Activated naive CD4-positive, alpha-beta T cell treated with anti-CD3 and anti-CD28 coated beads, Interleukin-2, amount 10 ng/mL, durations not matched to agents 7 days and 5 days (primary cell): ENCODE measurements at regions of chr4 and their contacts with region 1.

Region 1: GRCh38 chr4:153573881-153574802 is 108.0 kb downstream of the TMEM131L start:
- DNase-seq: peak; percentile 86
- H3K4me3 Mint-ChIP-seq: no peak overlapping the region
- H3K27ac Mint-ChIP-seq: peak overlapping the region; percentile 81
- H3K4me1 Mint-ChIP-seq: peaks cover 66% of the 10 kb centered on the region
- H3K27me3 Mint-ChIP-seq: no peaks in the 10 kb centered on the region

Region 2: GRCh38 chr4:153257151-153257620 is 317.0 kb before region 1 on chr4:
- CTCF ChIA-PET with region 1: no interaction called
- DNase-seq: peak; percentile 26
- H3K4me3 Mint-ChIP-seq: no peak overlapping the region
- H3K27ac Mint-ChIP-seq: no peak overlapping the region
- H3K4me1 Mint-ChIP-seq: peaks cover 1% of the 10 kb centered on the region
- H3K27me3 Mint-ChIP-seq: peaks cover 28% of the 10 kb centered on the region

Region 3: DNA sequence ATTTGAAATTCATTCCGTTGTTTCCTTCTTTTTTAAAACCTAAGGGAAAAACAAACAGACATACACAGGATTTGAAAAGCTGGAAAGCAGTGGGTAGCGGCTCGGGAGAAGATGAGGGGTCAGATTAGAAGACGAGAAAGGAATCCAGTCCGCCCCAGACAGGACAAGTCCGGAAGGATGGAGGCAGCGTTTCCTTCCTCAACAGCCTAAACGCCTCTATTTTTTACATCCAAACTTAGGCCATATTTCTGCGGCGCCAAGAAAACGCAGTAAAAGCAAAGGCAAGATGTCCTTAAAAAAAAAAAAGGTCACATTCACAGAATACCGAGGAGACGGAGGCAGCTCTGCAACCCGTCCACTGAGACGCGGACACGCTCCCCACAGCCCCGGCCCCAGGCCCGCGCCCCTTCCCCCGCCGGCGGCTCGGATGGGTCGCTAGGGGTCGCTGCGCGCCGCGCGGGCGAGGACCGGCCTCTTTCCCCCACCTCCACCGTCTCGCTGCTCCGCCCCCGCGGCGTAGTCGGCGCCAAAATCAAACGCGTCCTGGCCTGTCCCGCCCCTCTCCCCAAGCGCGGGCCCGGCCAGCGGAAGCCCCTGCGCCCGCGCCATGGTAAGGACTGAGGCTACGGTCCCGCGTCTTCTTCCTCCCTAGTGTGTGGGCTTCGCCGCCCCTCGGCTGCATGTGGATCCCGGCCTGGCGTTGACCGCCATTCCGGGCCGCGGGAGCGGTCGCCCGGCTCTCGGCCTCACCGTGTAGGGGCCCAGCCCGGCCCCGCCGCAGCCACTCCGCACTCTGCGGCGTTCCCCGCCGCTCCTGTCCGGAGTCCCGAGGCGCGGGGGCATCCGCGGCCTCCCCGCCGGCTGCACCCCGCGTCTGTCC is 229.8 kb before region 1 on chr4 and contains the start of gene MND1:
- CTCF ChIA-PET with region 1: interaction called, 65 read pairs
- DNase-seq: peak; percentile 94
- H3K4me3 Mint-ChIP-seq: peak within 1 kb of the TSS; percentile 90
- H3K27ac Mint-ChIP-seq: peak within 1 kb of the TSS; percentile 91
- H3K4me1 Mint-ChIP-seq: peaks cover 51% of the 10 kb centered on the region
- H3K27me3 Mint-ChIP-seq: peaks cover 20% of the 10 kb centered on the region

Region 4: DNA sequence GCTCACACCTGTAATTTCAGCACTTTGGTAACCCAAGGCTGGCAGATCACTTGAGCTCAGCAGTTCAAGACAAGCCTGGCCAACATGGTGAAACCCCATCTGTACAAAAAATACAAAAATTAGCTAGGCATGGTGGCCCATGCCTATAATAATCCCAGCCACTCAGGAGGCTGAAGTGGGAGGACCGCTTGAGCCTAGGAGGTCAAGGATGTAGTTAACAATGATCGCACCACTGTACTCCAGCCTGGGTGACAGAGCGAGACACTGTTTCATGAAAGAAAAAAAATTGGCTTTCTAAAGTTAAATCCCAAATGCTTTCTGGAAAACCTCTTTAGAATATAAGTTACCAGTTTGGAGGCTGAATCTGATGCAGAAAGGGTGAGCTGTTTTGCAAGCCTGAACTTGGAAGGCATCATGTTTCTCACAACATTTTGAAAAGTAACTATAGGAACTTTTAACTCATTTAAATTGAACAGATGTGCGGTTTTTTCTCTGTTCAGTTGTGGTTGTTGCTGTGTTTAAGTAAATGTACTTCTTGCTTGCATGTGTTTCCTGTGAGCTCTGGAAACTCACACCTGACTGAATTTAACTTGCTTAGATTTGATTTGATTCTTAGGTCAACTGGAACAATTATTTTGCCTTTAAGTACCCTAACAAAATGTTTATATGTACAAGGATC is 147.8 kb before region 1 on chr4:
- CTCF ChIA-PET with region 1: interaction called, 67 read pairs
- DNase-seq: no peak
- H3K4me3 Mint-ChIP-seq: peak overlapping the region; percentile 43
- H3K27ac Mint-ChIP-seq: peak overlapping the region; percentile 95
- H3K4me1 Mint-ChIP-seq: peaks cover 79% of the 10 kb centered on the region
- H3K27me3 Mint-ChIP-seq: no peaks in the 10 kb centered on the region

Region 5: DNA sequence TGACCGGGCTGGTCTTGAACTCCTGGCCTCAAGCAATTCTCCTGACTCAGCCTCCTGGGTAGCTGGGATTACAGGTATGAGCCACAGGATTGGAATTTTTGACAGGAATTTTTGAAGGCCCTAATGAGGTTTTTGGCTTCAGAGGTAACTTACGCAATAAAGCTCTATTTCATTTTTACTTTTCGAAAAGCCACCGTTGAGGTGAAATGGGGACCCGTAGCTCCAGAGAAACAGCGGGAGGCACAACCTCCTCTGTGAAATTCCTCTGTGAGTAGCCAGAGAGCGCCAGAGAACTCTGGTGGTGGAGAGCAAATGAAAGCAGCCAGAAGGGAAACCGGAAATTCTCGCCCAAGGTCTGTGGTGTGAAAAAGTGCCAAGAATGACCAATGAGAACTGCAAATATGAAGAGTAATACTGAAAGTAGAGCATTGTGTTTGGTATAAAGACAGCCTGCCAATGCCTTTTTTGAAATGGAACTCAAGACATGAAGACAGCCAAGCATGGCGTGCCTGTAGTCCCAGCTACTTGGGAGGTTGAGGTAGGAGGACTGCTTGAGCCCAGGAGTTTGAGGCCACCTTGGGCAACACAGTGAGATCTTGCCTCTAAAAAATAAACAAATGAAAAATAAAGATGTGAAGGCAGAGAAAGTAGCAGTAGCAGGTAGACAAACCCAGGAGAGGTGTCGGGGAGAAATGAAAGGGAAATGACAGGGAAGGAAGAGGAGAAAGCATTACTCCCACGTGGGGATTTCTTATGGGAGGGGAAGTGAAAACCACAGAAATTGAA is 141.0 kb before region 1 on chr4:
- CTCF ChIA-PET with region 1: interaction called, 67 read pairs
- DNase-seq: peak; percentile 87
- H3K4me3 Mint-ChIP-seq: peak overlapping the region; percentile 72
- H3K27ac Mint-ChIP-seq: peak overlapping the region; percentile 97
- H3K4me1 Mint-ChIP-seq: peaks cover 78% of the 10 kb centered on the region
- H3K27me3 Mint-ChIP-seq: no peaks in the 10 kb centered on the region

Region 6: GRCh38 chr4:153466081-153466948 is 107.8 kb before region 1 on chr4 and contains the start of gene TMEM131L:
- CTCF ChIA-PET with region 1: interaction called, 24 read pairs
- DNase-seq: peak; percentile 75
- H3K4me3 Mint-ChIP-seq: peak within 1 kb of the TSS; percentile 96
- H3K27ac Mint-ChIP-seq: peak within 1 kb of the TSS; percentile 95
- H3K4me1 Mint-ChIP-seq: peaks cover 47% of the 10 kb centered on the region
- H3K27me3 Mint-ChIP-seq: peaks cover 4% of the 10 kb centered on the region

Region 7: GRCh38 chr4:153488006-153488891 is 85.9 kb before region 1 on chr4:
- CTCF ChIA-PET with region 1: interaction called, 16 read pairs
- DNase-seq: peak; percentile 76
- H3K4me3 Mint-ChIP-seq: peak overlapping the region; percentile 59
- H3K27ac Mint-ChIP-seq: peak overlapping the region; percentile 89
- H3K4me1 Mint-ChIP-seq: peaks cover 78% of the 10 kb centered on the region
- H3K27me3 Mint-ChIP-seq: no peaks in the 10 kb centered on the region

Region 8: DNA sequence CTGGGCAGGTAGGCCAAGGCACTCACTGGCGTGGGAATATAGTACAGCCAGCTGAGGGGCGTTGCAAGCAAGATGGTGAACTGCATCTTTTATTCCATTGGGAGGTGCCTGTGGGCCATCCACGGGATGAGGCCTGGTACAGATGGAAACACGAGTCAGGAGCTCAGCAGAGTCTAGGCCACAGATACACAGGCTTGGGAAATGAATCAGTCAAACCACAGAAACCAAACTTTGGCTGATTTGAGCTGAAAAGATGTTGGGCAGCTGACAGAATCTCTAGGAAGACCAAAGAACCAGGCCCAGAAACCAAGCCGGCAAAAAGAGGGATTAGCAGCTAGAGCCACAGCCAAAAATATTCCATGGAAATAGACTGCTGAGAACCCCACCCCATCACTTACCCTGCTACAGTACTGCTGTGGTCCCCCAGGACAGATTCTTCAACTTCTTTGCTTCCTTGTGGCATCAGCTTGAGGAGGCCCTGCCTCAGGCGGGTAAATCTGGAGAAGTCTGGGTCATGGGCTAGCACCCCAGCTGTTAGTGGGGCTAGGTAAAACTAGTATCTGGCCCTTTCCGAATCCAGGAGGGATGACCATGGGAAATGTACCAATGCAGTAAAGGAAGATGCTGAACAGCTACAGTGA is 32.6 kb before region 1 on chr4:
- CTCF ChIA-PET with region 1: interaction called, 13 read pairs
- DNase-seq: peak; percentile 28
- H3K4me3 Mint-ChIP-seq: no peak overlapping the region
- H3K27ac Mint-ChIP-seq: peak overlapping the region; percentile 39
- H3K4me1 Mint-ChIP-seq: peaks cover 47% of the 10 kb centered on the region
- H3K27me3 Mint-ChIP-seq: no peaks in the 10 kb centered on the region